Tibial artery (tissue), 4 donors: ENCODE measurements at regions of chr4 and their contacts with region 1.

Region 1: GRCh38 chr4:37802068-37802666 is 24.3 kb upstream of the PGM2 start:
- DNase-seq: peak; percentile 23 to 75
- H3K4me3 ChIP-seq: no peak overlapping the region
- H3K27ac ChIP-seq: no peak overlapping the region
- H3K4me1 ChIP-seq: no peaks in the 10 kb centered on the region
- H3K27me3 ChIP-seq: no peaks in the 10 kb centered on the region
- CTCF ChIP-seq: peak; percentile 48 to 56

Region 2: DNA sequence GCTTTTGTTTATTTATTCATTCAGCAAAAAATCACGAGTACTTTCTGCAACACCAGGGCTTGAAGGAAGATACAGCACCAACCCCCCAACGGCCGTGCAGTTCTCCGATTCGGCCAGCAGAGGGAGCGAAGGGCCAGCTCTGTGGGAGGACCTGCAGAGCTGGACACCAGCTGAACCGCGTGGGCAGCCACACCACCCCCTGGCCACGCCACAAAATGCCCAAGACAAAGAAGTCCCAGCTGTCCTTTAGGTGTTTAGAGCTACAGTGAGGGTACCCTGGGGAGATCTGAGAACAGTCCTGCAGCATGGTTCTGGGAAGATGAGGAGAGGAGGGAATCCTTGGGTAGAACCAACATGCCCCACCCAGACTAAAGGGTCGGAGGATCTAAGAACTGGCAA is 199.1 kb before region 1 on chr4:
- intact Hi-C with region 1: loop called (anchors 5 kb)
- DNase-seq: peak; percentile 82 to 89
- H3K4me3 ChIP-seq: no peak overlapping the region
- H3K27ac ChIP-seq: no peak overlapping the region
- H3K4me1 ChIP-seq: no peaks in the 10 kb centered on the region
- H3K27me3 ChIP-seq: no peaks in the 10 kb centered on the region
- CTCF ChIP-seq: peak; percentile 95 to 99